Gastrocnemius medialis (tissue), 4 donors: ENCODE measurements at regions of chrX and their contacts with region 1.

Region 1: DNA sequence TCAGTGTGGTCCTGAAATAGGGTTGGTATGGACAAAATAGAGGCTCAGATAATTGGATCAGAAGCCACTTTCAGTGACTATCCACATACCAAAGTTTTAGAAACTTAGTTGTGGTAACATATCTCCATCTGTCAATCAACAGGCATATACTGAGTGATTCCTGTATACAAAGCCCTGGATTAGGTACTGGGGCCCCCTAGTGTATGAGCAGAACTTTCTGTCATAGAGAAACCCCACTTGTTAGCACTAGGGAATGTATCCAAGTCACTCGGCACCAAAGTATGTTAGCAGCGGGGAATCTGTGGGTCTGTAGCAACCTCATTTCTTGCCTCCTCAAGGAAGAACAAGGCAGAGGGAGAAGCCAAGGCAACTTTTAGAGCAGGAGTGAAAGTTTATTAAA is 50.7 kb downstream of the MAP7D3 start:
- DNase-seq: peak in 1 of 2 donors; percentile 46
- ATAC-seq: peak; percentile 25 to 57
- H3K4me3 ChIP-seq: peak overlapping the region; percentile 47 to 62 (median 56)
- H3K27ac ChIP-seq: peak overlapping the region; percentile 84 to 92 (median 84)
- H3K4me1 ChIP-seq: peaks cover 30 to 44% of the 10 kb centered on the region in 2 donors
- H3K27me3 ChIP-seq: no peaks in the 10 kb centered on the region
- CTCF ChIP-seq: peak; percentile 34 to 60 (median 52)
- POLR2A ChIP-seq: no peak

Region 2: DNA sequence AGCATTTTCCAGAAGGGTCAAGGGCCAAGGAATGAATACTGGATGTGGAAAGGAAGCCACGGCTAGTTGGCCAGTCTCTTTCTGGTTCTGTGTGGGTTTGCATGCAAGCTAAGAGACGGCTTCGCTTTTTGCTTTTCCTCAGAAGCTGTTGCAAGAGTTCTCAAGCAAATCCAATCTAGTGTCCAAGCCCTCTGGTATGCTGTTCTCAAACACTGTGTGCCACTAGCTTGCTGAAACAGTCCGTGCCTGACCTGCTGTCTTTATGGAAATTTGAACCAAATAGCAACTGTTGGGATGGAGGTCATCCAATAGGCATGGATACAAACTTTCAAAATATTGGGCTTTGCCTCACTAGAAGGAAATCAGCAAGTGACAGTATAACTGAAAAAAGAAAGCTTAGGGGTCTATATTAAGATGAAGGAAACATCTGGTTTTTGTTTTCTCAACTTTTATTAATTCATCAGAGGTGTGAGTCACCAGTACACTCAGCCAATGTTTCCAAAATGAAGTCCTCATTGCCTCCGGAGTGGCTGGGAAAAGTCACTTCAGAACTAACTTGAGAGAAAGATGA is 144.7 kb before region 1 on chrX:
- in situ Hi-C with region 1: no loop called
- intact Hi-C with region 1: loop called (anchors 5 kb)
- DNase-seq: peak; percentile 47 to 63
- ATAC-seq: peak; percentile 97 to 98
- H3K4me3 ChIP-seq: peak overlapping the region in 3 of 4 donors; percentile 20 to 35 (median 22)
- H3K27ac ChIP-seq: peak overlapping the region; percentile 70 to 86 (median 82)
- H3K4me1 ChIP-seq: peaks cover 8 to 15% of the 10 kb centered on the region in 2 donors
- H3K27me3 ChIP-seq: no peaks in the 10 kb centered on the region
- CTCF ChIP-seq: no peak
- POLR2A ChIP-seq: peak in 1 of 2 donors; percentile 45

Region 3: DNA sequence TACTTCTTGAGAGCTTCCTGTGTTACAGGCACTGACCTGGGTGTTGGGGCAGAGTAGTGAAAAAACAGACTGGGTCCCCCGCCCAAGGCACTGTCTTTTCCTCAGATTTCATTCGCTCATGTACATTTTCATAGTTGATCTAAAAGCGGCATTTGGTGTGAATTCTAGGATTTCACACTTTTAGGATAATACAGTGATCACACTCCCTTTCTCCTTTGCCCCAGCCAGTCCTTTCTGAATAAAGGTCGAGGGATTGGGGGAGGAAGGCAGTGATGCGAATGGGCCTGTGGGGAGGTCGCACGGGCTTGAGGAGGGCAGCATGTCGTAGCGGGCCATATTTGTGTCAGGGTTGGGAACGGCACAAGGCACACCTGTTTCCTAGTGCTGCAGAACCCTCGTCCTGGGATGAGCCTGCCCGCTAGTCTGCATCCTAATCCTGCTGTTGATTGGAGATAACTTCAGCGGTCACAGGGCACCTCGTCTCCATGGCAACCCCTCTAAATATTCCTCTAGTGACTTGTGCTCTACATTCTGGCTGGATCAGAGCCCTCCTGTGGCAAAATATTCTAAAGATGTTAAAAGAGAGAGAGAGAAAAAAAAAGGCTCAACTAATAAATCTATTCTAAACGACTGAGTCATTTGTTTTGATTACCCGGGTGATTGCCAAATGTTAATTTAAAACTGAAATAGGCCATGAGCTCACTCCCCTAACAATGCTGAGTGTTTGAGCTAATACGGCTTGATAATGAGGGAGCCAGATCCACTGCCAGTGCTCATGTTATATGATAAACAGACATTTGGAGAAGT is 31.3 kb before region 1 on chrX:
- in situ Hi-C with region 1: loop called in 1 of 4 experiments (anchors 5 kb)
- intact Hi-C with region 1: loop called (anchors 1 kb)
- DNase-seq: peak in 1 of 2 donors; percentile 35
- ATAC-seq: peak; percentile 16 to 78
- H3K4me3 ChIP-seq: peak overlapping the region in 1 of 4 donors; percentile 18
- H3K27ac ChIP-seq: peak overlapping the region; percentile 78 to 92 (median 84)
- H3K4me1 ChIP-seq: peaks cover 7 to 29% of the 10 kb centered on the region in 2 donors
- H3K27me3 ChIP-seq: no peaks in the 10 kb centered on the region
- CTCF ChIP-seq: no peak
- POLR2A ChIP-seq: no peak

Region 4: DNA sequence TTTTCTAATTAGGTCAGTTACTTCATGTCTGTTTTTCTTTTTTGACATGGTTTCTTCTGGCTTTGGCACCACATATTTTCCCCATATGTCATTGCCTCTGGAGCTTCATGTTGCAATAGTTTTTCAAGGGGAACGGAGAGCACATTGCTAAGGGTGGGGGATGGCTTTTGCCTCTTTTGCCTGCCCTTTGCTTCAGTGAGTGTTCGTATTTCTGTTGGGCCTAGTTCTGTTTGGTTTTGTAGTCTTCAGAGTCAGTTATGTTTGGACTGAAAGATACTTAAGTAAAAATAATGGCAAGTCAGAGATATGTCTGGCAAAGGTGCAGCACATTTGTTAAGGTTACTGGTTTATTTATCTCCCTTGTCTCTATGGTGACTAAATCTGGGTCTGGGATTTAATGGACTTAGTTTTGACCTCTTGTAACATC is 24.1 kb before region 1 on chrX:
- in situ Hi-C with region 1: loop called in 1 of 4 experiments (anchors 5 kb)
- intact Hi-C with region 1: loop called (anchors 2 kb)
- DNase-seq: peak in 1 of 2 donors; percentile 39
- ATAC-seq: peak; percentile 82 to 86
- H3K4me3 ChIP-seq: peak overlapping the region in 1 of 4 donors; percentile 14
- H3K27ac ChIP-seq: peak overlapping the region; percentile 84 to 92 (median 84)
- H3K4me1 ChIP-seq: peaks cover 36 to 60% of the 10 kb centered on the region in 2 donors
- H3K27me3 ChIP-seq: no peaks in the 10 kb centered on the region
- CTCF ChIP-seq: no peak
- POLR2A ChIP-seq: no peak

Region 5: DNA sequence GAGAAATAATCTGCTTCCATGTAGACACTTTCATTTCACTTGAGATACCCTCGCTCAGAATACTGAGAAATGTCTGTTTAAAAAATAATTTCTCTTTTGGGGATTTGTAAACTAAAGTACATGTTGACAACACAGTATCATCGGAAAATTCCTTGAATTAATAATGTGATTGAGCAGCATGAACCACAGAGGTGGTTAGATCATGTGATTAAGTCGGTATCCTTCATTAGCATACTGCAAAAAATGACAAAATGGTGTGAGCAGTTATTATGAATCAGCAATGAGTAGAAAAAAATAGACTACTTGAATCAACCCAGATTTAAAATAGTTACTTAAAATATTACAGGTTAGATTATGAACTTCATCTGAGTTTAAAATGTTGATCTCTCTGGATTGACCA is 36.6 kb after region 1 on chrX:
- in situ Hi-C with region 1: no loop called
- intact Hi-C with region 1: no loop called
- DNase-seq: no peak
- ATAC-seq: no peak
- H3K4me3 ChIP-seq: no peak overlapping the region
- H3K27ac ChIP-seq: no peak overlapping the region
- H3K4me1 ChIP-seq: no peaks in the 10 kb centered on the region
- H3K27me3 ChIP-seq: no peaks in the 10 kb centered on the region
- CTCF ChIP-seq: no peak
- POLR2A ChIP-seq: no peak

Region 6: GRCh38 chrX:136304493-136304892 is 104.0 kb after region 1 on chrX:
- in situ Hi-C with region 1: no loop called
- intact Hi-C with region 1: no loop called
- DNase-seq: no peak
- ATAC-seq: no peak
- H3K4me3 ChIP-seq: no peak overlapping the region
- H3K27ac ChIP-seq: no peak overlapping the region
- H3K4me1 ChIP-seq: no peaks in the 10 kb centered on the region
- H3K27me3 ChIP-seq: peaks cover 0 to 4% (median 0%) of the 10 kb centered on the region in 3 donors
- CTCF ChIP-seq: no peak
- POLR2A ChIP-seq: no peak

Region 7: GRCh38 chrX:136336623-136337022 is 136.2 kb after region 1 on chrX:
- in situ Hi-C with region 1: no loop called
- intact Hi-C with region 1: no loop called
- DNase-seq: no peak
- ATAC-seq: no peak
- H3K4me3 ChIP-seq: no peak overlapping the region
- H3K27ac ChIP-seq: no peak overlapping the region
- H3K4me1 ChIP-seq: no peaks in the 10 kb centered on the region
- H3K27me3 ChIP-seq: no peaks in the 10 kb centered on the region
- CTCF ChIP-seq: peak in 1 of 5 experiments; percentile 23
- POLR2A ChIP-seq: no peak